BJ (cell line): ENCODE measurements at regions of chr6 and their contacts with region 1.

Region 1: DNA sequence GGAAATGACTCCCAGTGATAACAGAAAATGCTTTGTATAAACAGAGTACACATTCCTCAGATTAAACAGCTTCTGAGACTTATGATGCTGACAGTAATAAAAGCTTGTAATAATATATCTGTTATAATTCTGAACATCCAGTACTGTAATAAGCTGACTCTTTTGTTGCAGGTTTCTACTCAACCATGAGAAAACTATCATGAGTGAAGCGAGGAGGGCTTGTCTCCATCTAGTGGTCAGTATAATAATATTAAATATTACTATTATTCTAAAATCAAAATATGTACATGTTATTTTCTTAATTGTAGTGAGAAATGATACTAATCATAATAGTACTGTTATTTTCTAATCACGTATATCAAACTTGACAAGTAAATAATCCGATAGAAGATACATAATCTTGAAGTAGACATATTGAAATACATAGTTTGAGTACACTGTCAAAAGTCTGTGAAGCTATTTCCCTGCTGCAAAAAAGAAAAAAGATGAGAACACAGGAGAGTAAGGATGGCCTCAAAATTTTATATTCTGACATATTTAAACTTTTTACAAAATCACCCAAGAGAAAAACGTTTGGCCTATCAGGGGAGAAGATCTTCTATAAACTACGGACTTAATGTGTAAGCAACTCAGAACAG is 183.1 kb downstream of the MOXD1 start:
- DNase-seq: no peak
- H3K4me3 ChIP-seq: no peak overlapping the region
- H3K27me3 ChIP-seq: no peaks in the 10 kb centered on the region
- CTCF ChIP-seq: peak; percentile 49

Region 2: DNA sequence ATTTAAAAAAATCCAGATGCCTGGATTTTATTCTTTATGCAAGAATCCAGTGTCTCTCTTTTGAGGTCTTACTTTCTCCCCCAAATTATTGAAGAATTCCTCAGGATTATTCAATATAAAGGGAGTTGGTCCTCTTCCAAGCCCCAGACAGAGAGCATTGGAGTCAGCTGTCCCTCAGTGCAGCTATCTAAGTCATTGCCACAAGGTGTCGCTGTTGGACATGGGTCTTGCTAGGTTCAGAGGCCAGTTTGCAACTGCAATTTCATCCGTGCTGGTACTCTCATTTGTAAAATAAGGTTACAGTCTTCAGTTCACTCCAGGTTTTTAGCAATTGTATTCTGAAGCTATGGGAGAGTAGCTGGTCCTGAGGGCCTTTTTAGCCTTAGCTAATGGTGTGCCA is 294.8 kb before region 1 on chr6:
- CTCF ChIA-PET with region 1: interaction called, 16 read pairs
- POLR2A ChIA-PET with region 1: no interaction called
- DNase-seq: no peak
- H3K4me3 ChIP-seq: no peak overlapping the region
- H3K27me3 ChIP-seq: no peaks in the 10 kb centered on the region
- CTCF ChIP-seq: peak; percentile 61